GM12878 (cell line): ENCODE measurements at regions of chr3 and their contacts with region 1.

Region 1: DNA sequence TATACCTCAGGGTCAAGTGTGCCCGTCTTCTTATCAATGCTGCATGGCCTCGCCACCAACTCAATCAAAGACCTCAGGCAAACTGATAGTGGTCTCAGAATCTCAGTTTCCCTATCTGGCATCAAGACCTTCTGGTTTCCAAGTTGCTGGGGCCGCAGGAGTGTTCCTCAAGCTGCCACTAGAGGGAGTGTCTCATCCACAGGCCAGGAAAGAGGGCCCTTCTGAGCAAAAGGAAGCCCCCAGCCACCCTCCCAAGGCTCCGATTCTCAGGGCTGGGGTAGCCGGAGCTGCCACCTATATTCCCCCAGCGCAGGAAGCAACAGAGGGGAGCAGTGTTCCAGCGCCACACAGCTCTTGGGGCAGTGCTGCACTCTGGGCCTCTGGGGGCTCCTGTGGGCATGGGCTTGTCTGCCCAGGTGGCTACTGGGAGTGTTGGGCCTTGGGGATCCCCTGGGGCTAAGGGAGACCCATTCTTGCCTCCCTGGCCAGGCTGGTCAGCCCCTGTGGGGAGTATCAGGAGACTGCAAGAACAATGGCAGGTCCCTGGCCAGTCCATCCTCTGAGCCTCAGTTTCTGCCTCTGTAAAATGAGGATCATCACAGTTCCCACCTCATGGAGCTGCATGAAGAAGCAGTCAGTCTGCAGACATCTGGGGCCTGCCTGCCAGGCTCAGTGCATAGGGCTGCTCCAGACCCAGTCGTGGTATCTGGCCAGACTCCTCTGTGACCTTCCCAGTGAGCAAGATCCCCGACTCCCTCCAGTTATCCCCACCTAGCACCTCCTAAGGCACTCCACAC is 23.4 kb upstream of the SEC13 start:
- DNase-seq: no peak
- ATAC-seq: peak; percentile 80
- H3K4me3 ChIP-seq: no peak overlapping the region
- H3K27ac ChIP-seq: no peak overlapping the region
- H3K4me1 ChIP-seq: no peaks in the 10 kb centered on the region
- H3K27me3 ChIP-seq: no peaks in the 10 kb centered on the region; a peak in 1 of 4 replicates
- CTCF ChIP-seq: peak; percentile 87 to 95 (median 90)
- EP300 ChIP-seq: no peak
- POLR2A ChIP-seq: no peak
- RAD21 ChIP-seq: peak; percentile 82

Region 2: DNA sequence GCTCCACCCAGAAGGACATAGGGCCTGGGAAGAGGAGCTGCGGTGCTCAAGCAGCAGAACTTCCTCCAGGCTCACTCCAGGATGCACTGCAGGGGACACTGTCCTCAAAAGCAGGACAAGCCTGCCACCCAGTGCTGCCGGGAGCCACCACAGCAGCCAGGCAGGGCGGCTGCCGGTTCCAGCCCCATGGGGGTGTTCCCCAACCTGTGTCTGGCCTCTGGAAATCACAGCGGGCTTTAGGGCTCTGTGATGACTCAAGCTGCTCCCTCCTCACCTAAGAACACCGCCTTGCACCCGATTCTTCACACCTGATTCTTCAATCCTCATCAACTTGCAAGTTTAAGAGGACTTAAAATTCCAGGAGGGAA is 399.7 kb after region 1 on chr3:
- CTCF ChIA-PET with region 1: interaction called, 34 read pairs
- POLR2A ChIA-PET with region 1: interaction called, 7 read pairs
- RAD21 ChIA-PET with region 1: interaction called, 17 read pairs
- SMC1A ChIA-PET with region 1: interaction called, 4 read pairs
- in situ Hi-C with region 1: loop called (anchors 5 kb)
- intact Hi-C with region 1: loop called (anchors 1 kb)
- DNase-seq: no peak
- ATAC-seq: peak; percentile 47; the same call in 2 of the 3 replicates
- H3K4me3 ChIP-seq: no peak overlapping the region
- H3K27ac ChIP-seq: no peak overlapping the region
- H3K4me1 ChIP-seq: no peaks in the 10 kb centered on the region
- H3K27me3 ChIP-seq: no peaks in the 10 kb centered on the region; a peak in 1 of 4 replicates
- CTCF ChIP-seq: peak in 1 of 3 experiments; percentile 25; a peak in 1 of 6 replicates
- EP300 ChIP-seq: no peak
- POLR2A ChIP-seq: no peak
- RAD21 ChIP-seq: no peak